ENCODE measurements at regions of chr1 and their contacts with region 1.

Region 1: GRCh38 chr1:2194898-2195673 is 514 bp upstream of the FAAP20 start:
- DNase-seq: peak; percentile 91
- H3K4me3 Mint-ChIP-seq: peak overlapping the region; percentile 78
- H3K27ac Mint-ChIP-seq: peak overlapping the region; percentile 92
- H3K4me1 Mint-ChIP-seq: peaks cover 49% of the 10 kb centered on the region
- H3K27me3 Mint-ChIP-seq: no peaks in the 10 kb centered on the region

Region 2: GRCh38 chr1:2085080-2085479 is 110.0 kb before region 1 on chr1:
- CTCF ChIA-PET with region 1: no interaction called
- POLR2A ChIA-PET with region 1: no interaction called
- DNase-seq: no peak
- H3K4me3 Mint-ChIP-seq: no peak overlapping the region
- H3K27ac Mint-ChIP-seq: no peak overlapping the region
- H3K4me1 Mint-ChIP-seq: no peaks in the 10 kb centered on the region
- H3K27me3 Mint-ChIP-seq: no peaks in the 10 kb centered on the region

Region 3: GRCh38 chr1:2133039-2133878 is 61.8 kb before region 1 on chr1:
- CTCF ChIA-PET with region 1: interaction called, 14 read pairs
- POLR2A ChIA-PET with region 1: interaction called, 3 read pairs
- DNase-seq: peak; percentile 98
- H3K4me3 Mint-ChIP-seq: peak overlapping the region; percentile 72
- H3K27ac Mint-ChIP-seq: peak overlapping the region; percentile 60
- H3K4me1 Mint-ChIP-seq: peaks cover 10% of the 10 kb centered on the region
- H3K27me3 Mint-ChIP-seq: no peaks in the 10 kb centered on the region

Region 4: GRCh38 chr1:2227346-2228153 is 32.5 kb after region 1 on chr1:
- CTCF ChIA-PET with region 1: interaction called, 16 read pairs
- POLR2A ChIA-PET with region 1: interaction called, 50 read pairs
- DNase-seq: peak; percentile 97
- H3K4me3 Mint-ChIP-seq: peak overlapping the region; percentile 71
- H3K27ac Mint-ChIP-seq: peak overlapping the region; percentile 63
- H3K4me1 Mint-ChIP-seq: peaks cover 17% of the 10 kb centered on the region
- H3K27me3 Mint-ChIP-seq: peaks cover 3% of the 10 kb centered on the region

Region 5: GRCh38 chr1:2255420-2256369 is 60.6 kb after region 1 on chr1:
- CTCF ChIA-PET with region 1: interaction called, 5 read pairs
- POLR2A ChIA-PET with region 1: interaction called, 11 read pairs
- DNase-seq: peak; percentile 83
- H3K4me3 Mint-ChIP-seq: no peak overlapping the region
- H3K27ac Mint-ChIP-seq: no peak overlapping the region
- H3K4me1 Mint-ChIP-seq: peaks cover 42% of the 10 kb centered on the region
- H3K27me3 Mint-ChIP-seq: no peaks in the 10 kb centered on the region

Region 6: DNA sequence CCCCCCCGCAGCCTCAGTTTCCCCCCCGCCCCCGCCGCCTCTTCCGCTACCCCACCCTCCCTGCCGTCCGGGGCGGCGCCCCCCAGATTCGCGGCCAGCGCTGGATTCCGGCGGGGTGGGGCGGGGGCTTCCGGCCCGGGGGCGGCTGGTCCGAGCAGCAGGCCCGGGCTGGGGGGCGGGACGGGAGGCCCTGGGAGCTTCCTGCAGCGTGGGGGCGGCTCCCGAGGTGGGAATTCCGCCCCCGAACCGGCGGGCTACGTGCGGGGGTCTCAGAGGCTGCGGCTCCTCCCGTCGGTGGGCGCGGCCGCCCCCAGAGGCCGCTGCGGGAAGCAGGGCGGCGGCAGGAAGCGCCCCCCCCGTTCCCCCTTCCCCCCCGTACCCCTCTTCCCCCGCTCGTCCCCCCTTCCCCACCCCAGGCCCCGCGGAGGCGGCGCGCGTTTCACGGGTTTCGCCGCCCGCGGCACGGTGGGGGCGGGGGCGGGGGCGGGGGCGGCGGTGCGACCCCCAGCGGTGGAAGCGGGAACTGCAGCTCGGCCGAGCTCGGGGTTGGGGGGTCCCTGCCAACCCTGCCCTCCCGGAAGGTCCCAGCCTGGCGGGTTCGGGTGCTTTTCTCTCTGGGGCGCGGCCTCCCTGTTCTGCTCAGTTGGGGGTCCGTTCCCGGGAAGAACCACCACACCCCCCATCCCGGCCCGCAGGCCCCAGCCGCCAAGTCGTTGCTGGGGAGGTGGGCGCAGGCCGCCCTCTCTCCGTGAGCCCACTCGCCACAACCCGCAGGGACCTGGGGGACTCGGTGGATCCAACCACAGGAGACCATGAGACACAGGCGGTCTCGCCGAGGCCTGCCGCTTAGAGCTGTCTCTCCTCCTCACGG is 120.0 kb after region 1 on chr1:
- CTCF ChIA-PET with region 1: interaction called, 19 read pairs
- POLR2A ChIA-PET with region 1: interaction called, 5 read pairs
- DNase-seq: peak; percentile 61
- H3K4me3 Mint-ChIP-seq: peak overlapping the region; percentile 27
- H3K27ac Mint-ChIP-seq: no peak overlapping the region
- H3K4me1 Mint-ChIP-seq: peaks cover 15% of the 10 kb centered on the region
- H3K27me3 Mint-ChIP-seq: no peaks in the 10 kb centered on the region

Region 7: DNA sequence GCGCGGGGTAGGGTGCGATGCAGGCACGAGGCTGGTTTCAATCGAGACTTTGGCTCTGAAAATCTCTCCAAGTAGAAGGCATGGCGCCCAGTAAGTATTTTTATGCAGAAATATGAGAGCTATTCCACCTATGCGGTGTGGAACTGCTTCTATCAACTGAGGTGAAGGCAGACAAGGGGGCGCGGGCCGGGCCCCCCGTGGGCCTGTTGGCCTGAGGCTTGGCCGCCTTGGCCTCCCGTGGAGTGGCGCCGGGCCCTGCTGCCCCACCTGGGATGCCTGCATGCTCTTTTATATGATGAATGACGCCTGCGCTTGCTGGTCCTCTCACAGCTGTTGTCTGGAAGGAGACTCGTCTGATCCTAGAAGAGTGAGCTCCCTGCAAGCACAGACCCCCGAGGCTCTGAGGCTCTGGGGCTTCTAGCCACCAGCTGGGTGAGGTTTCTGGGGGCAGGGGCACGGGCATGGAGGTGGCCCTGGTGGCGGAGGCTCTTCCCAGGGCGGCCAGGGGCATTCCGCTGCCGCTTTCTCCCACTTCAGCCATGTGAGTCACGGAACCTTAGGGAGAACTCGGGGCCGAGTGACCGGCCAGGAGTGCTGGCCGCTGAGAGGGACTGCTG is 160.1 kb after region 1 on chr1:
- CTCF ChIA-PET with region 1: no interaction called
- POLR2A ChIA-PET with region 1: no interaction called
- DNase-seq: no peak
- H3K4me3 Mint-ChIP-seq: no peak overlapping the region
- H3K27ac Mint-ChIP-seq: no peak overlapping the region
- H3K4me1 Mint-ChIP-seq: no peaks in the 10 kb centered on the region
- H3K27me3 Mint-ChIP-seq: no peaks in the 10 kb centered on the region

Region 8: GRCh38 chr1:2391041-2391930 is 196.2 kb after region 1 on chr1 and contains the starts of genes MORN1 and RER1:
- CTCF ChIA-PET with region 1: interaction called, 37 read pairs
- POLR2A ChIA-PET with region 1: interaction called, 25 read pairs
- DNase-seq: peak; percentile 99
- H3K4me3 Mint-ChIP-seq: peak within 1 kb of the TSS; percentile 85
- H3K27ac Mint-ChIP-seq: peak within 1 kb of the TSS; percentile 79
- H3K4me1 Mint-ChIP-seq: peaks cover 45% of the 10 kb centered on the region
- H3K27me3 Mint-ChIP-seq: no peaks in the 10 kb centered on the region
- total RNA-seq, gene MORN1: 6.2 to 6.3 TPM
- total RNA-seq, gene RER1: 151 to 160 TPM

Region 9: DNA sequence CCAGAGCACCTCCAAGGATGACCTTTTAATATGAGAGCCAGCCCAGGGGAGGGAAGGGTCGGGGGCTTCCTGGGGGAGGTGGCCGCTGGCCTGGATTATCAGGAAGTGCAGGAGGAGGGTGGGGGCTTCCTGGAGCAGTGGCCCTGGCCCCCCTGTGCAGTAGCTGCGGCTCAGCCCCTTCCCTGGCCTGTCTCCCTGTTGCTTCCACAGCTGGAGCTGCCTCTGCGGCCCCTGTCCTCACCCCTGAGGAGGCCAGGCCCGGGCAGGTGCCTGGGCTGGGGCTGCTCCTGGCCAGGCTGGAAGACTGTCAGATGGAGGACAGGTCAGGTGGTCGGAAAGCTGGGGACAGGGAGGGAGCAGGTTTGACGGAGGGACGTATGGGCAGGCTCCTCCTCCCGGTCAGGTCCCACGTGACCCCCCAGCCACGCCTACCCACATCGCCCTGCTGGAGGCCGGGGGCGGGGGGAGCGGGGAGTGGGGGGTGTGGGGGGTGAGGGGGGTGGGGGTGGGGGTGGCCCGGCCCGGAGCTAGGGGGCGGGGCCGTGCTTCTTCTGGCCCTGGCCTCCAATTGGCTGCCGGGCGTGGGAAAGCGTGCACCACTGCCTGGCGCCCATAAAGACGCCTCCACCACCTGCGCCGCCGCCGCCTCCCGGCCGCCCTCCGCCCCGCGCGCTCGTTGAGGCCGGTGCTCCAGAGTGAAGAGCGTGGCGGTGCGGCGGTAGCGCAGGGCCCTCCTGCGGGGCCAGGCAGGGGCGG is 350.9 kb after region 1 on chr1:
- CTCF ChIA-PET with region 1: interaction called, 15 read pairs
- POLR2A ChIA-PET with region 1: interaction called, 15 read pairs
- DNase-seq: peak; percentile 94
- H3K4me3 Mint-ChIP-seq: peak overlapping the region; percentile 94
- H3K27ac Mint-ChIP-seq: peak overlapping the region; percentile 99
- H3K4me1 Mint-ChIP-seq: peaks cover 22% of the 10 kb centered on the region
- H3K27me3 Mint-ChIP-seq: peaks cover 9% of the 10 kb centered on the region

Measured in activated CD4-positive, alpha-beta memory T cell treated with anti-CD3 and anti-CD28 coated beads, Interleukin-2, amount 10 ng/mL, durations not matched to agents 7 days and 5 days (primary cell).